Activated CD4-positive, alpha-beta T cell treated with anti-CD3 and anti-CD28 coated beads for 36 hours (primary cell): ENCODE measurements at regions of chr2 and their contacts with region 1.

Region 1: GRCh38 chr2:239267288-239267951 is 133.4 kb downstream of the HDAC4 start:
- DNase-seq: peak; percentile 95
- ATAC-seq: peak; percentile 75
- H3K4me3 Mint-ChIP-seq: peak overlapping the region; percentile 80
- H3K27ac Mint-ChIP-seq: peak overlapping the region; percentile 96
- H3K4me1 Mint-ChIP-seq: peaks cover 77% of the 10 kb centered on the region
- H3K27me3 Mint-ChIP-seq: peaks cover 18% of the 10 kb centered on the region

Region 2: DNA sequence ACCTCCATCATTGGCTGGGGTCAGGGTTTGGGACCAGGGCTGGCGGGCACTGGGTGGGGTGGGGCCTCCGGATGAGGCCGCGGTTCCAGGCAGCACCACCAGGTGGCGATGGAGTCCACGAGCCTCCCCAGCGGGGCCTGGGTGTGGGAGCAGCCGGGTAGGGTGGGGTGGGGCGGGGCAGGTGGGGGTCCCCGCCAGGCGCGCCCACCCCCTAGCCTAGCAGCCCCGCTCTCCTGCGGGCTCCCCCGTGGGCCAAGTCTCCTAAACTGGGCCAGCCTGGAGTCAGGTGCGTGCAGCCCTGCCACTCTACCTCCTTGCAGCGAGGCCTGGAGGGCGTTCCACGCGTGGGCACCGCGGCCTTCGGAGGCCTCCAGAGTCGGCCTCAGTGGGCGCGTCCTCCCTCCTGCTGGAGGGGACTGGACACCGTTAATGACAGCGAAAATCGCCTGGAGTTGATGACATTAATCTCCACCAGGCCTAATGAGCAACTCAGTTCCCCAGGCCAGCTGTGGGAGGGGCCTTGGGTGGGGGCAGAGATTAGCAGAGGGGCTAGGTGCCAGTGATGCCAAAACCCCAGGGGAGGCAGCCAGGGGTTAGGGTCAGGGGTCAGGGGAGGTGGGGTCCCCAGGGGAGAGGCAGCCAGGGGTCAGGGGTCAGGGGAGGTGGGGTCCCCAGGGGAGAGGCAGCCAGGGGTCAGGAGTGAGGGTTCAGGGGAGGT is 231.9 kb before region 1 on chr2:
- CTCF ChIA-PET with region 1: no interaction called
- POLR2A ChIA-PET with region 1: no interaction called
- intact Hi-C with region 1: loop called (anchors 2 to 10 kb)
- DNase-seq: peak; percentile 81
- ATAC-seq: peak; percentile 95
- H3K4me3 Mint-ChIP-seq: no peak overlapping the region
- H3K27ac Mint-ChIP-seq: no peak overlapping the region
- H3K4me1 Mint-ChIP-seq: no peaks in the 10 kb centered on the region
- H3K27me3 Mint-ChIP-seq: peaks cover 9% of the 10 kb centered on the region

Region 3: GRCh38 chr2:239129147-239129920 is 138.1 kb before region 1 on chr2:
- CTCF ChIA-PET with region 1: no interaction called
- POLR2A ChIA-PET with region 1: no interaction called
- intact Hi-C with region 1: no loop called
- DNase-seq: no peak
- ATAC-seq: no peak
- H3K4me3 Mint-ChIP-seq: no peak overlapping the region
- H3K27ac Mint-ChIP-seq: no peak overlapping the region
- H3K4me1 Mint-ChIP-seq: no peaks in the 10 kb centered on the region
- H3K27me3 Mint-ChIP-seq: no peaks in the 10 kb centered on the region

Region 4: GRCh38 chr2:239216614-239217273 is 50.7 kb before region 1 on chr2:
- CTCF ChIA-PET with region 1: no interaction called
- POLR2A ChIA-PET with region 1: no interaction called
- intact Hi-C with region 1: loop called (anchors 1 kb)
- DNase-seq: peak; percentile 71
- ATAC-seq: peak; percentile 97
- H3K4me3 Mint-ChIP-seq: peak overlapping the region; percentile 66
- H3K27ac Mint-ChIP-seq: peak overlapping the region; percentile 95
- H3K4me1 Mint-ChIP-seq: peaks cover 73% of the 10 kb centered on the region
- H3K27me3 Mint-ChIP-seq: no peaks in the 10 kb centered on the region

Region 5: GRCh38 chr2:239288951-239289511 is 21.6 kb after region 1 on chr2:
- CTCF ChIA-PET with region 1: interaction called, 5 read pairs
- POLR2A ChIA-PET with region 1: no interaction called
- intact Hi-C with region 1: loop called (anchors 1 kb)
- DNase-seq: peak; percentile 69
- ATAC-seq: peak; percentile 65
- H3K4me3 Mint-ChIP-seq: peak overlapping the region; percentile 36
- H3K27ac Mint-ChIP-seq: peak overlapping the region; percentile 89
- H3K4me1 Mint-ChIP-seq: peaks cover 80% of the 10 kb centered on the region
- H3K27me3 Mint-ChIP-seq: peaks cover 21% of the 10 kb centered on the region

Region 6: GRCh38 chr2:239326831-239327535 is 59.6 kb after region 1 on chr2:
- CTCF ChIA-PET with region 1: no interaction called
- POLR2A ChIA-PET with region 1: no interaction called
- intact Hi-C with region 1: loop called (anchors 2 to 5 kb)
- DNase-seq: peak; percentile 89
- ATAC-seq: peak; percentile 85
- H3K4me3 Mint-ChIP-seq: peak overlapping the region; percentile 17
- H3K27ac Mint-ChIP-seq: peak overlapping the region; percentile 74
- H3K4me1 Mint-ChIP-seq: peaks cover 75% of the 10 kb centered on the region
- H3K27me3 Mint-ChIP-seq: peaks cover 5% of the 10 kb centered on the region

Region 7: GRCh38 chr2:239544143-239544917 is 276.9 kb after region 1 on chr2:
- CTCF ChIA-PET with region 1: no interaction called
- POLR2A ChIA-PET with region 1: no interaction called
- intact Hi-C with region 1: loop called in 1 of 2 experiments (anchors 2 kb)
- DNase-seq: peak; percentile 4
- ATAC-seq: no peak
- H3K4me3 Mint-ChIP-seq: no peak overlapping the region
- H3K27ac Mint-ChIP-seq: peak overlapping the region; percentile 83
- H3K4me1 Mint-ChIP-seq: peaks cover 50% of the 10 kb centered on the region
- H3K27me3 Mint-ChIP-seq: peaks cover 7% of the 10 kb centered on the region